Activated CD4-positive, alpha-beta T cell treated with anti-CD3 and anti-CD28 coated beads for 36 hours (primary cell): ENCODE measurements at regions of chr14 and their contacts with region 1.

Region 1: GRCh38 chr14:61837336-61838229 is 75.4 kb downstream of the SNAPC1 start:
- DNase-seq: peak; percentile 87
- ATAC-seq: peak; percentile 95
- H3K4me3 Mint-ChIP-seq: no peak overlapping the region
- H3K27ac Mint-ChIP-seq: no peak overlapping the region
- H3K4me1 Mint-ChIP-seq: peaks cover 4% of the 10 kb centered on the region
- H3K27me3 Mint-ChIP-seq: no peaks in the 10 kb centered on the region

Region 2: DNA sequence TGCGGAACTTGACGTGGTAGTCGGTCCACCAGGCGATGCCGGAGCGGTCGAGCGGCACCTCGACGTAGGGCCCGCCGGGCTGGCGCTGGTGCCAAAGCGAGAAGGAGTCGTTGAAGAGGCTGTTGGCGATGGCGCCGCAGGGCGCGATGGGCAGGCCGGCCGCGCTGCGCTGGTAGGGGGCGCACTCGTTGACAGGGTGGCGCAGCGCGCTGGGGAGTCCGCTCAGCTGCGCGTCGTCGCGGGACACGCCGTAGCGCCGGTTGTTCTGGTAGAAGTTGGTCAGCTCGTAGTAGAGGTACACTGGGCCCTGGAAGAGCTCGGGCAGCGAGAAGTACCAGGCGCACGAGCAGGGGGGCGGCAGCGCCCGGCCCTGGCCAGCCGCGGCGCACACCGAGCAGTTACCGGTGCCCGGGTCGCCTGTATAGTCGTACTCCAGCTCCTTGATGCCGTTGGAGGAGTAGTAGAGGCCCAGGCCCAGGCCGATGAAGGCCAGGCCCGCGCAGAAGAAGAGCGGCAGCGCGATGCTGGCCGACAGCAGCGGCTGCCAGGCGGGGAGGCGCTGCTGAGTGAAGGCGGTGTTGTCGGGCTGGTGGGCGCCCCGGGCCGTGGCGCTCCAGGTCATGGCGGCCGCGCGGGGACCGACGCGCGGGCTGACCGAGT is 556.9 kb before region 1 on chr14:
- CTCF ChIA-PET with region 1: interaction called, 15 read pairs
- POLR2A ChIA-PET with region 1: no interaction called
- intact Hi-C with region 1: loop called in 1 of 2 experiments (anchors 5 kb)
- DNase-seq: peak; percentile 88
- ATAC-seq: peak; percentile 90
- H3K4me3 Mint-ChIP-seq: peak overlapping the region; percentile 82
- H3K27ac Mint-ChIP-seq: peak overlapping the region; percentile 87
- H3K4me1 Mint-ChIP-seq: peaks cover 28% of the 10 kb centered on the region
- H3K27me3 Mint-ChIP-seq: peaks cover 8% of the 10 kb centered on the region

Region 3: DNA sequence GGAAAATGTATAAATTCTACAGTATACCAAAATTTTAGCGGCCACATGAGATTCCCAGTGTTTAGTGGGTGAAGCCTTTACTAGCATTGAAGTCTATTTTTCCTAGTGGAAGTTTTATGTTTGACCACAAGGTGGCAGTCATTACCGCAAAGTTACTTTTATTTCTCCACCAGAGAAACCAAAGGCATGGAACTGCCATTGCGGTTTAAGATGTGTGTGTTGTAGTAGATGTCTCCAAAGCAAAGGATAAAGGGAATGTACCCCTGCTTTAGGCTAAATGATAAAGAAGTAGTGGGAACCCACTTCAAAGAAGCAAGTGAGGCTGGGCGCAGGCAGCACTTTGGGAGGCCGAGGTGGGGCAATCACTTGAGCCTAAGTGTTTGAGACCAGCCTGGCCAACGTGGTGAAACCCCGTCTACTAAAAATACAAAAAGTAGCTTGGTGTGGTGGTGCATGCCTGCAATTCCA is 375.7 kb before region 1 on chr14:
- CTCF ChIA-PET with region 1: interaction called, 41 read pairs
- POLR2A ChIA-PET with region 1: interaction called, 3 read pairs
- intact Hi-C with region 1: loop called (anchors 1 kb)
- DNase-seq: peak; percentile 51
- ATAC-seq: peak; percentile 45
- H3K4me3 Mint-ChIP-seq: no peak overlapping the region
- H3K27ac Mint-ChIP-seq: peak overlapping the region; percentile 92
- H3K4me1 Mint-ChIP-seq: peaks cover 77% of the 10 kb centered on the region
- H3K27me3 Mint-ChIP-seq: no peaks in the 10 kb centered on the region

Region 4: DNA sequence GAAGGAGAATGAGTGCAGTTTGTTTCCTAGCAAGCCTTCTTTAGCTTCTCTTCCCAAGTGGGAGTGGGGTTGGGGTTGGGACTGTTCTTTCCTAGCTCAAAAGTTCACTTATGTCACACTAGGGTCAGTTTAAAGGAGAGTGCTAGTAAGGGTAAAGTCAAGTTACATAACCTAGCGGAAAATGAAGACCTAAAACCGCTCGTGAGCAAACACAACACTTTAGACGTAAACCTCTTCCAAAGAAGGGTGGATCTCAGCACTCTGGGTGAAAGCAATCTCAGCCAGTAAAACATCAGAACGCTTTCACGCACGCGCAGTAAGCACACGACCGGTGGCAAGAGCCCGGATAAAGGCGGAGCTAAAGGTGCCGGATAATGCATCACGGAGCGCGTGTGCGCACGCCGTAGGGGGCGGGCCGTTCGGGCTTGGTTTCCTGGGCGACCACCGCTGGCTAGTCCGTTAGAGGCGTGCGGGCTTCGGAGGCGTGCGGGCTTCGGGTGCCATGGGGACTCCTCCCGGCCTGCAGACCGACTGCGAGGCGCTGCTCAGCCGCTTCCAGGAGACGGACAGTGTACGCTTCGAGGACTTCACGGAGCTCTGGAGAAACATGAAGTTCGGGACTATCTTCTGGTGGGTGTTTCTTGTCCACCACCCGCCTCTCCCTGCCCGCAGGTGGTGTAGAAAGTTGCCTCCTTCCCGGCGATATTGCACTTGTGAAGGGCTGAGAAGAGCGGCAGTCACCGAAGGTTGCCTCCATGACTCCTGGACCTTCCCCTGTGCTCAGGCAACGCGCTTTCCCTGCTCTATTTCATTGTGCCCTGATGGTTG is 75.4 kb before region 1 on chr14 and contains the start of gene SNAPC1:
- CTCF ChIA-PET with region 1: interaction called, 11 read pairs
- POLR2A ChIA-PET with region 1: no interaction called
- intact Hi-C with region 1: loop called (anchors 5 kb)
- DNase-seq: peak; percentile 98
- ATAC-seq: peak; percentile 98
- H3K4me3 Mint-ChIP-seq: peak within 1 kb of the TSS; percentile 95
- H3K27ac Mint-ChIP-seq: peak within 1 kb of the TSS; percentile 96
- H3K4me1 Mint-ChIP-seq: peaks cover 35% of the 10 kb centered on the region
- H3K27me3 Mint-ChIP-seq: no peaks in the 10 kb centered on the region
- total RNA-seq, gene SNAPC1: 10.5 to 11.2 TPM

Region 5: GRCh38 chr14:61847861-61848260 is 10.3 kb after region 1 on chr14:
- CTCF ChIA-PET with region 1: interaction called, 10 read pairs
- POLR2A ChIA-PET with region 1: no interaction called
- intact Hi-C with region 1: no loop called
- DNase-seq: no peak
- ATAC-seq: no peak
- H3K4me3 Mint-ChIP-seq: no peak overlapping the region
- H3K27ac Mint-ChIP-seq: no peak overlapping the region
- H3K4me1 Mint-ChIP-seq: no peaks in the 10 kb centered on the region
- H3K27me3 Mint-ChIP-seq: peaks cover 7% of the 10 kb centered on the region

Region 6: GRCh38 chr14:63051966-63052365 is 1214.4 kb after region 1 on chr14:
- CTCF ChIA-PET with region 1: no interaction called
- POLR2A ChIA-PET with region 1: no interaction called
- intact Hi-C with region 1: no loop called
- DNase-seq: no peak
- ATAC-seq: no peak
- H3K4me3 Mint-ChIP-seq: no peak overlapping the region
- H3K27ac Mint-ChIP-seq: no peak overlapping the region
- H3K4me1 Mint-ChIP-seq: no peaks in the 10 kb centered on the region
- H3K27me3 Mint-ChIP-seq: peaks cover 17% of the 10 kb centered on the region